CD4-positive, alpha-beta memory T cell (primary cell): ENCODE measurements at regions of chr9 and their contacts with region 1.

Region 1: DNA sequence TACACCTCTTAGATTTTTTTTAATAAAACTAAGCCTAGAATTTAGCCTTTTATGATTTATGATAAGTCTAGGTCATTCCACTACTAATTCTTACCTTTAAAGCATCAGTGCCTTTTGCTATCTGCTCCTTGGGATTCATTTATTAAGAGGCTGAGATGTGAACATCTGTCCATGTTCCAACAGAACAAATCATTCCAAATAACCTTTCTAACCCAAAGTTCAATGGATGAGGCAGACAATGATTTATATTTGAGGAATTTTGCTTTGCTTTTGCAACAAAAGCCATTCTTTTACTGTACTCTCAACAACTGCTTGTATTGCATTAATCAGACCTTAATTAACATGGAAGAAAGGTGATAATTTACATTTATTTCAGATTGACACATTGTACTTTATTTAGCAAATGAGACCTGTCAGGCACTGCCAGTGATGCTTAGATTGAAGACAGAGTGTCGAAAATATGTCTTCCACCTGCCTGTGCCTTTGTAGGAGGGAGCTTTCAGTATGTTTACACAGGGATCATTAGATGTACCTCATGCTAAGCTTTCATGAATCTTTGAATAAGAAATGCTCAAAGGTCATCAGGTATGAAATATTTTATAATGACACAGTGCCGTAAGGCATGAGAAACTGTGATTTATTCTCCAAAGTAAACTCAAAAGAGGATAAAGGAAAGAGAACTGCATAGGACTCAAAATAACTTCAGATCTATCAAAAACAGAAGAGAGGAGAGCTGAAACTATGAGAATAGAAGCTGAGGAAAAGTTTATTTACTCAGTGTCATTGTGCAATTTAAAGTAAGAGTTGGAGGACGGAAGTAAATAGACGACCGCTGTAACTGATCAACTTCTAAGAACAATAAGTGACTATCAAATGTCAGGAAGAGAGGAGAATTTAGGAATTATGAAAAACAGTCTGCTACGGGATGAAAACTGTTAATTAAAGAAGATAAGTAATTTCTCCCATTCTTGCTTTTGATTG is 36.7 kb upstream of the IZUMO3 start:
- DNase-seq: no peak
- H3K4me3 ChIP-seq: no peak overlapping the region
- H3K4me3 Mint-ChIP-seq: no peak overlapping the region
- H3K27ac ChIP-seq: no peak overlapping the region
- H3K27ac Mint-ChIP-seq: no peak overlapping the region
- H3K4me1 ChIP-seq: no peaks in the 10 kb centered on the region
- H3K4me1 Mint-ChIP-seq: no peaks in the 10 kb centered on the region
- H3K27me3 ChIP-seq: no peaks in the 10 kb centered on the region
- H3K27me3 Mint-ChIP-seq: no peaks in the 10 kb centered on the region

Region 2: DNA sequence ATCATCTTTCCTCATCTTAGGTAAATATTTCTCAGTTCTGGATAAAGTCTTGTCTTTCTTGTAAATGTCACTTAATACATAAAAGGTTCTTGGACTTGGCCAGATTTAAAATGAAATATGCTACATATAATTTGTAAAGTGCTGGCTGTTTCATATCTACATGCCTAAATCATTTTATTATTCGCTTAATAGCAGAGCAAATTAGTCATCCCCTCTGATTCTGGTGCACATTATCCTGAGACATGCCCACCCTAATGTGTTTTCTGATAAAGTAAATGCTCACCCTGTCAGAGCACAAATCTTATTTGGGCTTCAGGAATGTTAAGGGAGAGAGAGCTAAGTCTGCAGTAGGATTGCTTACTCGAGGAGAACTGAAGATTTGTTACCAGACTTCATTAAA is 129.8 kb after region 1 on chr9:
- CTCF ChIA-PET with region 1: no interaction called
- POLR2A ChIA-PET with region 1: no interaction called
- intact Hi-C with region 1: no loop called
- DNase-seq: no peak
- H3K4me3 ChIP-seq: no peak overlapping the region
- H3K4me3 Mint-ChIP-seq: no peak overlapping the region
- H3K27ac ChIP-seq: no peak overlapping the region
- H3K27ac Mint-ChIP-seq: no peak overlapping the region
- H3K4me1 ChIP-seq: no peaks in the 10 kb centered on the region
- H3K4me1 Mint-ChIP-seq: no peaks in the 10 kb centered on the region
- H3K27me3 ChIP-seq: no peaks in the 10 kb centered on the region
- H3K27me3 Mint-ChIP-seq: no peaks in the 10 kb centered on the region

Region 3: DNA sequence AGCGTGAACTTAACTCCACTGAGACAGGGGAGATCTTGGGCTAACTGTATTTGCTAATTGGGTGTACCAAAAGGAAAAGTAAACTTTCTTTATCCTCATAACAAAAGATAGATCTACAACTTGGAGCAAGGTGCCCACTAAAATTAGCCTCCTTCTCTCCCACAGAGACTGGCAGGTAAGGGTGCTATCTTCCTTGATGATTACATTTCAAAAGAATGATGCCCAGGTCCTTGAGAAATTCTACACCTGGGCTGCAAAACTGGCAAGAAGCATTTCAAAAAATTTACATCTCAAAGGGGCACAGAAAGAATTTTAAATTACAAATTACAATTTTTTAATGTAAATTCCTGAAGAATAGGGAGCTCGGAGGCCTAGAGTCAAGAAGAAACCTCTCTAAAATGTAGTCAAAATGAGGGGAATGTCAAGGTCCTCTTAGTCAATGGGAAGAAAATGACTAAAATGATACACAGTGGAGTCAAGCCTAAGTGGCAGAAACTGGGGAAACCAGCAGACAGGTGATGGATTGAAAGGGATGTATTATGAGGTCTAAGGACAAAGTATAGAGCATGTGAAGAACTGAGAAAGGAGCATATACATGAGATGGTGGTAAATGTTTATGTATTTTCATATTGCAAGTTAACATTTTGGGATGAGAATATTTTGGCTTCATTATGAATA is 1444.1 kb after region 1 on chr9:
- CTCF ChIA-PET with region 1: no interaction called
- POLR2A ChIA-PET with region 1: no interaction called
- intact Hi-C with region 1: loop called (anchors 10 kb)
- DNase-seq: no peak
- H3K4me3 ChIP-seq: no peak overlapping the region
- H3K4me3 Mint-ChIP-seq: peak overlapping the region in 1 of 8 donors; percentile 33
- H3K27ac ChIP-seq: no peak overlapping the region
- H3K27ac Mint-ChIP-seq: peak overlapping the region in 1 of 7 donors; percentile 78
- H3K4me1 ChIP-seq: no peaks in the 10 kb centered on the region
- H3K4me1 Mint-ChIP-seq: no peaks in the 10 kb centered on the region
- H3K27me3 ChIP-seq: no peaks in the 10 kb centered on the region
- H3K27me3 Mint-ChIP-seq: no peaks in the 10 kb centered on the region